ENCODE measurements at regions of chr6 and their contacts with region 1.

Region 1: GRCh38 chr6:43228951-43229802 is at the start of gene DNPH1:
- DNase-seq: peak; percentile 89
- ATAC-seq: peak; percentile 67
- H3K4me3 ChIP-seq: peak within 1 kb of the TSS; percentile 43 to 70 (median 61)
- H3K4me3 Mint-ChIP-seq: peak within 1 kb of the TSS; percentile 92
- H3K27ac ChIP-seq: peak within 1 kb of the TSS in 1 of 2 donors; percentile 73
- H3K27ac Mint-ChIP-seq: peak within 1 kb of the TSS; percentile 90
- H3K4me1 ChIP-seq: peaks cover 34 to 45% of the 10 kb centered on the region in 2 donors
- H3K4me1 Mint-ChIP-seq: peaks cover 29% of the 10 kb centered on the region
- H3K27me3 ChIP-seq: peaks cover 0 to 5% (median 0%) of the 10 kb centered on the region in 4 experiments
- H3K27me3 Mint-ChIP-seq: peaks cover 9% of the 10 kb centered on the region
- CTCF ChIP-seq: peak; percentile 95
- total RNA-seq, gene DNPH1: 25.8 and 29.0 TPM in 2 replicates

Region 2: DNA sequence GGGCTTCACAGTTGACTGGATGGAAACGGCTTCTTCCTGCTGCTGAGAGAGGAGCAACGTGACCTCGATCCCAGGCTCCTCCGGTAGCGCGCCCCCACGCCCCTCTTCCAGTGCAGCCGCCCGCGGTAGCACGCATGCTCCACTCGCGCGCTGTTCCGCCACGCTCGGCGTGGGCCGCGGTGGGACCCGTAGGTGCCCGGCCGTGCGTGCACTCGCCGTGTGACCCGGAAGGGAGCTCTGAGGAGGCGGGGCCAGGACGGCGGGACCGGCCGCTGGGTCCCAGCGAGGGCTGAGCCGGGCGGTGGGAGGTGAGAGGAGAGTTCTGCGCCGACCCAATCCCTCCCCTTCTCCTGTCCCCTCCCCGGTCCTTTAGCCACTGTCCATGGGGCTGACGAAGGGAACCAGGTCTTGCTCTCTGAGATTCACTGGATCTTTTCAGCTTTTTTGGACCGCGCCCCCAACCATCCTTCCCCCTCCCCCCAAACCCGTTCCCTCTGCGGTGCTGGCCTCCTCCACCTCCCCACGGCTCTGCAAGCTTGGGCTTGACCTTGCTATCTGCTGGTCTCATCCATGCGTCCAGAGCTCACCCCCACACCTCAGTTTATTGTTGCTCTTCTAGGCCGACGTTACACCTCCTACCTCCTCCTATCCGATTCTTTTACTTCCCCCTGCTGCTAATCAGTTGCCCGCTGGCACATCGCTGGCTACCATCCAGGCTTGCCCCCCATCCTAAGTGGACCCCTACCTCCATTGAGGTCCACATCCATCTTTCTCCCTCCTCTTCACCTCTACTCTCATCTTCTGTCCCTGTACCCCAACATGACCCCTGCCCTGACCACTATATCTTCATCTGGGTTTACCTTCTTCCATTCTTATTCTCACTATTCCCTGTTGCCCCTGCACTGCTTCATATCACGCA is 47.0 kb before region 1 on chr6 and contains the start of gene CUL9:
- CTCF ChIA-PET with region 1: interaction called, 4 read pairs
- POLR2A ChIA-PET with region 1: interaction called, 7 read pairs
- intact Hi-C with region 1: loop called (anchors 2 kb)
- DNase-seq: peak; percentile 90
- ATAC-seq: peak; percentile 99
- H3K4me3 ChIP-seq: peak within 1 kb of the TSS; percentile 60 to 90 (median 74)
- H3K4me3 Mint-ChIP-seq: peak within 1 kb of the TSS; percentile 92
- H3K27ac ChIP-seq: peak within 1 kb of the TSS; percentile 64 to 87
- H3K27ac Mint-ChIP-seq: peak within 1 kb of the TSS; percentile 91
- H3K4me1 ChIP-seq: peaks cover 20% of the 10 kb centered on the region in 2 donors
- H3K4me1 Mint-ChIP-seq: peaks cover 38% of the 10 kb centered on the region
- H3K27me3 ChIP-seq: no peaks in the 10 kb centered on the region
- H3K27me3 Mint-ChIP-seq: no peaks in the 10 kb centered on the region
- CTCF ChIP-seq: no peak
- total RNA-seq, gene CUL9: 110 and 115 TPM in 2 replicates

Region 3: GRCh38 chr6:43216200-43216599 is 13.0 kb before region 1 on chr6:
- CTCF ChIA-PET with region 1: interaction called, 15 read pairs
- POLR2A ChIA-PET with region 1: no interaction called
- intact Hi-C with region 1: no loop called
- DNase-seq: no peak
- ATAC-seq: no peak
- H3K4me3 ChIP-seq: no peak overlapping the region
- H3K4me3 Mint-ChIP-seq: no peak overlapping the region
- H3K27ac ChIP-seq: no peak overlapping the region
- H3K27ac Mint-ChIP-seq: no peak overlapping the region
- H3K4me1 ChIP-seq: no peaks in the 10 kb centered on the region
- H3K4me1 Mint-ChIP-seq: no peaks in the 10 kb centered on the region
- H3K27me3 ChIP-seq: no peaks in the 10 kb centered on the region
- H3K27me3 Mint-ChIP-seq: no peaks in the 10 kb centered on the region
- CTCF ChIP-seq: no peak

Region 4: DNA sequence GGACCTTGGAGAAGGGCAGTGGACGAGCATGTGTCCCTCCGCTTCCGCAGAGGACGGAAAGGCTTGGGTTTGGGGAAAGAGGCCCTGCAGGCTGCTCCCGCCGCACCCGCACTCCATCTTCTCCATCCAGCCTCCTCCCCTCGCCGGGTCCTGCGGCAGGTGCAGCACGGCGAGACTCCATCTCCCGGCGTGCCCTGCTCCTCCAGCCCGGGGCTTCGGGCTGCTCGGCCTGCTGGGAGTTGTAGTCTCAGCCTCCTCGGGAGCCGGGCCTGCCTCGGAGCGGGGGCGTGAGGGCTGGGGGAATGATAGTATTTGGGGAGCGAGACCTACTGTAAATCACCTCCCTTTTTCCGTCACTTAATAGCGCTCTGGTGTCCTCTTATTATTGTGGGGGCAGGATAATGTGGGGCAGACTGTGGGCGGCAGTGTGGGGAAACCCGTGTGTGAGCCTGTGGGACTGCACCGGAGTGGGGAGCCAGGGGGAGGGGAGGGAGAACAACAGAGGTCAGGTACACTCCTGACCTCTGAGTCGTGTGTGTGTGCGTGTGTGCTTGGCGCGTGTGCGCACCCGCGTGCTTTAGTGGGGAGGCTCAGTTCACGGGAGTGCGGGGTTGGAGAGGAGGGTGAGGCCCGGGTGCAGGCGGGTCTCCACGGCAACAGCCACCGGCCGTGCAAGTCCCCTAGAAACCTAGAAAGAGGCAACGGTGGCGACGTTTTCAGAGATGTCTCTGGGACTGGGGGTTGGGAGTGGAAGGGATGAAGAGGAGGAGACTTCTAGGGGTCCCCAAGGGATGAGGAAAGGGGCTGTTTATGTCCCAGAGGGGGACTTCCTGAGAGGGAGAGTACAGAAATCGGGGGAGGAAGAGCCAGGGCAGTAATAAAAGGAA is 18.2 kb after region 1 on chr6:
- CTCF ChIA-PET with region 1: interaction called, 8 read pairs
- POLR2A ChIA-PET with region 1: interaction called, 7 read pairs
- intact Hi-C with region 1: loop called (anchors 1 kb)
- DNase-seq: peak; percentile 87
- ATAC-seq: peak; percentile 96
- H3K4me3 ChIP-seq: peak overlapping the region; percentile 51 to 85 (median 72)
- H3K4me3 Mint-ChIP-seq: no peak overlapping the region
- H3K27ac ChIP-seq: peak overlapping the region; percentile 51 to 65
- H3K27ac Mint-ChIP-seq: peak overlapping the region; percentile 87
- H3K4me1 ChIP-seq: peaks cover 19 to 21% of the 10 kb centered on the region in 2 donors
- H3K4me1 Mint-ChIP-seq: peaks cover 22% of the 10 kb centered on the region
- H3K27me3 ChIP-seq: peaks cover 0 to 62% (median 38%) of the 10 kb centered on the region in 4 experiments
- H3K27me3 Mint-ChIP-seq: peaks cover 29% of the 10 kb centered on the region
- CTCF ChIP-seq: no peak